Activated T-helper 2 cell treated with anti-CD3 and anti-CD28 coated beads, Interferon-gamma antibody, Interleukin-2, Interleukin-4, amounts not matched to agents 10 μg/mL and 5 μg/mL and 100 μg/mL, durations not matched to agents 14 hours and 24 hours and 36 hours (primary cell): ENCODE measurements at regions of chr2 and their contacts with region 1.

Region 1: DNA sequence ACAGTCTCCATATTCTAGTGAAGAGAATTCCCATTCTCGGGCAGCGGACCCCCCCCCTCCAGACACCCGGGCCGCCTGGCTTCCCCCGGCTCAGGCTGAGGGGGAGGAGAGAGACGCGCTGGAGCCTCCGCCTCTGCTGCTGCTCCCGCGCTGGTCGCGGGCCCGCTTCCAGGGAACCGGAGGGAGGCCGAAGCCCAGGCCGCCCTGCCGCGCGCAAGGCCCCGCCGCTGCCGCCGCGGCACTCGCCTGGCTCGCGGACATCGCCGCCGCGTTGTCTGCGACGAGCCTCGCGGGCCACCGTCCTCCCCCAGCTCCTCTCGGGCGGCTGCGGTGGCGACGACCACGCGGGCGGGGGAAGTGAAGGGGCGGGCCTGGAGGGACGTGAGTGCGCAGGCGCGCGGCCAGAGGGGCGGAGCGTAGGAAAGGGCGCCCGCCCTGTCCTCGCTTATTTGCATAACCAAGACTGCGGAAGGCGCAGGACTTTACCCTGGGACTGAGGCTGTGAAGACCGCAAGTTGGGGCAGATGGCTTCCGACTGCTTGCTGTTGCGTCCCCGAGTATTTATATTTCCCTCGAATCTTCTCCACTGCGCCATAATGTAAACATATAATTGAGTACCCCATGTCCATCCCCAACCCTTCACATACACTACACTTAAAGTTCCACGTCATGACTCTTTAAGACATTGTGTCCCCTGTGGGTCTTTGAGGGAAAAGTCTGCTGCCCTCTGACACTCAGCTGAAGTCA is at the start of gene ARL5A:
- DNase-seq: peak; percentile 94
- H3K4me3 Mint-ChIP-seq: peak within 1 kb of the TSS; percentile 94
- H3K27ac Mint-ChIP-seq: peak within 1 kb of the TSS; percentile 82
- H3K4me1 Mint-ChIP-seq: peaks cover 28% of the 10 kb centered on the region
- H3K27me3 Mint-ChIP-seq: peaks cover 2% of the 10 kb centered on the region
- total RNA-seq, gene ARL5A: 64.9 and 71.7 TPM in 2 replicates

Region 2: DNA sequence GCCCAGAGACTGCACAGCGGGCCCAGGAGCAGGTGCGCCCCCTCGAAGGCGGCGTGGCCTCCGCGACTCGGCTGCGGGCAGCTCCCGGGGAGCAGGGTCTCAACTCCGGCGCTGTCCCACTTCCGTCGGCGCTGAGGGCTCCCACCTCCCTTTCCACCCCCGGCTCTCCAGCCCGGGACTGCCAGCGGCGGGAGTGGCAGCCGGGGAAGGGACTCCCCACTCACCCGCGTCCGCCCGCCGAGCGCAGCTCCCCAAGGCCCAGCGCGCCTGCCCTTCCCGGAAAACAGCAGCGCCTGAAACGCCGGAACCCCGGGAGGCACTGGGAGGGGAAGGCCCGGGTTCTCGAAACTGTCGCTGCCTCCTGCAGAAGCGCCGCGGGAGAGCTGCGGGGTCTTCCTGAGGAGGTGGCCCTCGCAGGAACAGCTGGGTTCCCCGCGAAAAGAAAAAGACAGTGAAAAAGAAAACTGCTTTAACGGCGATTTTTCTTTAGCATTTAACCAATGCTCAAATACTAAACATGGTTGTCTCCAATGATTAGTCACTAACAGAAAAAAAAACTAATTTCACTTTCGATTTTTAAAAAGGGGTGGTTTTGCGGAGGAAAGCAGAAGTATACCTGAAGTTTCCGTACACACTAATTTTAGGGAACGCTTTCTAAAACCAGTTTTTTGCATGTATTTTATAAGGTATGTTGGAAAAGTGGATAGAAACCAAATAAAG is 538.8 kb before region 1 on chr2 and contains the start of gene NMI:
- intact Hi-C with region 1: loop called (anchors 2 kb)
- DNase-seq: peak; percentile 69
- H3K4me3 Mint-ChIP-seq: peak within 1 kb of the TSS; percentile 91
- H3K27ac Mint-ChIP-seq: peak within 1 kb of the TSS; percentile 95
- H3K4me1 Mint-ChIP-seq: peaks cover 38% of the 10 kb centered on the region
- H3K27me3 Mint-ChIP-seq: peaks cover 4% of the 10 kb centered on the region
- total RNA-seq, gene NMI: 43.8 and 44.0 TPM in 2 replicates

Region 3: DNA sequence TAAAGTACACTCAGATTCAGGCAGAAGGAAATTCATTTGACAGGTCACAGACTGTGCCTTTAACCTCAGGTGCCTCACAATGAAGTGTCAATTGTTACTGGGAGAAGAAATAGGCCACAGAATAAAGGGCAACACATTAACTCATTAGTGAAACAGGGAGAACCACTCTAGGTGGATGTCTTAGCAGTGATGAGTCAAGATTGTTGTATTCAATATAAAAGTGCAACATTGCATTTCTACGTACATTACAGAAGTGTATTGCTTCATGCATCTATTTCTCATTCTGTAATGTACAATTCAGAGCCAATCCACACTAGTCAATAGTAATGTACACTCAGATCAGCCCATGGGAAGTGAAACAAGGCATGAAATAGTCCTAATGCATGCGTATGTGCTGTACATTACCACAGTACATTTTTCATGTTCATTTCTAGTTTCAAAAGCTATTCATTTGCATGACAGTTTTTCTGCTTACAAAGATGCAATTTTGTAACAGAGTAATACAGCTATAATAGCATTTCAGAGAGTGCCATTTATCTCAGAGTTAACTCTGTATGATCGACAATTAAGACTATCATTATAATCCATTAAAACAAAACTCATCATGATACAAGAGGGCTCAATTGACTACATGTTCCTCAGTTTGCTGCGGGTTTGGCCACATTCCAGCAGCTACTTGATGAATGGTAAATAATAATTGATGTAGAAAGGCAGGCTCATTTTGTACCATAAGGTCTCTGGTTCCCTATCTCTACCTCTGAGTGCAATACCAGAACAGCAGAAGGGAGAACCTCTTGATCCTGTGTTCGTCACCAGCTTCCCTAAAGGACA is 12.1 kb after region 1 on chr2:
- intact Hi-C with region 1: loop called (anchors 1 kb)
- DNase-seq: no peak
- H3K4me3 Mint-ChIP-seq: no peak overlapping the region
- H3K27ac Mint-ChIP-seq: no peak overlapping the region
- H3K4me1 Mint-ChIP-seq: no peaks in the 10 kb centered on the region
- H3K27me3 Mint-ChIP-seq: peaks cover 13% of the 10 kb centered on the region

Region 4: DNA sequence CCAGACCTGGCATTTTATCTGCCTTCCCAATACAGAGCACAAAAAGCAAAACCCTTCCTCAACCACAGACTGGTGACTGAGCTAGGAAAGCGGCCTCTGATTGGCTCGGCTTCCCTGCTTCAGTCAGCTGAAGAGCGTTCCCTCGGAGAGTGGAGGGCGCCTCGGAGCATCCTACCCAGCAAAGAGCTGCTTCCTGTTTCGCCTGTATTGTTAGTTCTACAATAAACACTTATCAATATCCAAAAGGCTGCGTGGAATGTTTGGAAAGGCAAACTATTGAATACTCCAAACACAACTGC is 145.5 kb after region 1 on chr2:
- intact Hi-C with region 1: loop called (anchors 10 kb)
- DNase-seq: no peak
- H3K4me3 Mint-ChIP-seq: no peak overlapping the region
- H3K27ac Mint-ChIP-seq: no peak overlapping the region
- H3K4me1 Mint-ChIP-seq: peaks cover 24% of the 10 kb centered on the region
- H3K27me3 Mint-ChIP-seq: peaks cover 2% of the 10 kb centered on the region

Region 5: DNA sequence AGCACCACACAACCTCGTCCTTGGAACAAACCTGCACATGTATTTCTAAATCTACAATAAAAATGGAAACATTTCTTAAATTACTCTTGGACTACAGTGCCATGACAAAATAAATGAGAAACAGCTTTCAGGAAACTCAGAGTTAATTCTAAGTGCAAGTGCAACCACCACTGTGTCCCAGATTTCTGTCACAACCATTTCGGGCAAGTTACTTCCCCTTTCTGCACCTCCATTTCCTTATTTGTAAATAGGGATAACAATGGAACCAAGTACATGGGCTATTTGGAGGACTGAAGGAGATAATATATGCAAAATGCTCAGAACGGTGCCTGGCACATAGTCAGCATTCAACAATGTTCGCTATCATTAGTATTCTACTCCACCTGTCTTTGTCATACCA is 177.3 kb after region 1 on chr2:
- intact Hi-C with region 1: loop called (anchors 10 kb)
- DNase-seq: no peak
- H3K4me3 Mint-ChIP-seq: no peak overlapping the region
- H3K27ac Mint-ChIP-seq: no peak overlapping the region
- H3K4me1 Mint-ChIP-seq: peaks cover 5% of the 10 kb centered on the region
- H3K27me3 Mint-ChIP-seq: peaks cover 5% of the 10 kb centered on the region

Region 6: DNA sequence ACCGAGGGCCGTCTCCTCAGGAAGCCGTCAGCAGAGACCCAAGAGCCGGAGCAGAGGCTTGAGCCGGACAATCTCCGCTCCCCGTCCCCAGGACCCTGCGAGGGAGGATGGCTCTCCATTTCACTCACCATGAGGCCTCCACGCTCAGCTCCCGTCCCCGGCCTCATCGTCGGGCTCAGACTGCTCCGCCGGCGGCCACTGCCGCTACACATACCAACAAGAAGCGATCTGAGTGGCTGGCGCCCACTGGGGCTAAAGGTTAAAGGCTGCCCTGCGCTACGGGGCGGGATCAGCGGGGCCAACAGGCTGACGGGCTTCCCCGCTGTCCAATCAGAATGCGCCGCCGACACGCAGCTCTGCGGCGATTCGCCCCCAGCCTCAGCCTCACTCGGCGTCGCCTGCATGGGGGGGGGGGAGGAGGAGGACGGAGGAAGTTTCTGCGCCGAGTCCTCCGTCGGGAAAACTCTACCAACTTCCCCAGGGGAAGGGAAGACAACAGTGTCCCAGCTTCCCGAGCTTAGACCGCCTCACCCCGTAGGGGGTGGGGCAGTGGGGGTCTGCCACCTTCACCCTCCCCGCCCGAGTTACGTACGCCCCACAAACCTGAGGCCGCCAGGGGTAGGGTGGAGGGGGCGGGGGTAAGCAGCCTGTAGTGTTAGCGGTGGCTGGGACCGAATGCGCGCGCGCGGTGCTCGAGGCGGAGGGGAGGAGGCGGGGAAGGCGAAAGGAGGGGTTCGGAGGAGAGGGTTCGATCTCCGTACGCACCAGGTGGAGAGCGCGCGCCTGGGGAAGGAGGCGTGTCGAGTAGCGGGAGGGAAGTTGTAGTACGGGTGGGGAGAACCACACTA is 889.1 kb after region 1 on chr2 and contains the start of gene PRPF40A:
- intact Hi-C with region 1: loop called (anchors 5 kb)
- DNase-seq: peak; percentile 97
- H3K4me3 Mint-ChIP-seq: peak within 1 kb of the TSS; percentile 98
- H3K27ac Mint-ChIP-seq: peak within 1 kb of the TSS; percentile 98
- H3K4me1 Mint-ChIP-seq: peaks cover 46% of the 10 kb centered on the region
- H3K27me3 Mint-ChIP-seq: no peaks in the 10 kb centered on the region
- total RNA-seq, gene PRPF40A: 144 and 170 TPM in 2 replicates